Activated B cell treated with CpG ODN at 0.5 μM for 24 hours (primary cell): ENCODE measurements at regions of chr2 and their contacts with region 1.

Region 1: GRCh38 chr2:19362755-19363473 is 4.5 kb upstream of the OSR1 start:
- DNase-seq: no peak
- ATAC-seq: peak; percentile 45
- H3K4me3 Mint-ChIP-seq: peak overlapping the region; percentile 86
- H3K27ac Mint-ChIP-seq: peak overlapping the region; percentile 64
- H3K4me1 Mint-ChIP-seq: peaks cover 38% of the 10 kb centered on the region
- H3K27me3 Mint-ChIP-seq: peaks cover 22% of the 10 kb centered on the region
- CTCF ChIP-seq: no peak

Region 2: GRCh38 chr2:18520451-18521425 is 842.2 kb before region 1 on chr2:
- CTCF ChIA-PET with region 1: interaction called, 10 read pairs
- POLR2A ChIA-PET with region 1: no interaction called
- intact Hi-C with region 1: loop called (anchors 1 kb)
- DNase-seq: peak; percentile 63
- ATAC-seq: peak; percentile 61
- H3K4me3 Mint-ChIP-seq: no peak overlapping the region
- H3K27ac Mint-ChIP-seq: no peak overlapping the region
- H3K4me1 Mint-ChIP-seq: no peaks in the 10 kb centered on the region
- H3K27me3 Mint-ChIP-seq: peaks cover 19% of the 10 kb centered on the region
- CTCF ChIP-seq: peak; percentile 79

Region 3: GRCh38 chr2:18749912-18750526 is 612.9 kb before region 1 on chr2:
- CTCF ChIA-PET with region 1: no interaction called
- POLR2A ChIA-PET with region 1: no interaction called
- intact Hi-C with region 1: loop called (anchors 1 kb)
- DNase-seq: no peak
- ATAC-seq: no peak
- H3K4me3 Mint-ChIP-seq: no peak overlapping the region
- H3K27ac Mint-ChIP-seq: no peak overlapping the region
- H3K4me1 Mint-ChIP-seq: no peaks in the 10 kb centered on the region
- H3K27me3 Mint-ChIP-seq: no peaks in the 10 kb centered on the region
- CTCF ChIP-seq: peak; percentile 61

Region 4: GRCh38 chr2:19347619-19348562 is 15.0 kb before region 1 on chr2:
- CTCF ChIA-PET with region 1: interaction called, 4 read pairs
- POLR2A ChIA-PET with region 1: interaction called, 15 read pairs
- intact Hi-C with region 1: loop called (anchors 1 kb)
- DNase-seq: peak; percentile 100
- ATAC-seq: peak; percentile 89
- H3K4me3 Mint-ChIP-seq: peak overlapping the region; percentile 98
- H3K27ac Mint-ChIP-seq: peak overlapping the region; percentile 98
- H3K4me1 Mint-ChIP-seq: peaks cover 35% of the 10 kb centered on the region
- H3K27me3 Mint-ChIP-seq: peaks cover 28% of the 10 kb centered on the region
- CTCF ChIP-seq: no peak

Region 5: DNA sequence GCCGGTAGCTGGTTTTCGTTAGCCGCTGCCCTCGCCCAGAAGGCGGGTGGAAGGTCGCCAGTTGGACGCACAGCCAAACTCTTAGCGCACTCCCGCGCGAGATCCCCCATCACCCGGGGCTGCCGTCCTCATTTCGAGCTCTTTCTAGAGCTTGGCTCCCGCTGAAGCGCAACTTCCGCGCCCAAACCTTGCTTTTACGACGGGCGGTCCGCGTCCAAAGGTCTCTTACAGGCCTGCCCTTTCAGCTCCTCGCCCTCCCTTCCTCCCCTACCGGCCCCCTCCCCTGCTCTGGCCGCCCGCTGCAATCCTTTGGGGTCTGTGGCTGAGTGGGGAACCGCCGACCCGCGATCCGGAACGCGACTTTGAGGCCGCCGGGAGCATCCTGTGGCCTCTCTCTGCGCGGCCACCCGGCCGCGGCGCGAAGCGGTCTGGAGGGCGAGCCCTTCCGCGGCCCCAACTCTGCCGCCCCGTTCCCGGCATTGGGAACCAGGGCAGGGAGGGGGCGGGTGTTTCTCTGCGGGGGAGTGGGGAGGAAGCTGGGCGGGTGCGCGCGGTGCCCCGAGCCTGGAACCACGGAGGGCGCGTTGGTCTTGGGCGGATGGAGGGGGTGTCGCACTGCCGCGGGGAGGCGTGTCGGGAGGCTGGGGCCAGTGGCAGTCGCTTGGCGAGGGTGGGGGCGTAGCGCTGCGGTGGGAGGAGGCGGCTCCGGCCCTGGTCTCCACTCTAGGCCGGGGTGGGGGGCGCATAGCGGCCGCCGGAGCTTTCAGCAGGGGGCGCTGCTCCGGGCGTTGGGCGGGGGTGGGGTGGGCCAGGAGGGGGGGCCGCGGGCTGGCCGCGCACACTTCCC is 1303.6 kb after region 1 on chr2 and contains the start of gene GDF7:
- CTCF ChIA-PET with region 1: no interaction called
- POLR2A ChIA-PET with region 1: no interaction called
- intact Hi-C with region 1: loop called (anchors 5 kb)
- DNase-seq: peak; percentile 67
- ATAC-seq: peak; percentile 78
- H3K4me3 Mint-ChIP-seq: peak within 1 kb of the TSS; percentile 87
- H3K27ac Mint-ChIP-seq: peak within 1 kb of the TSS; percentile 82
- H3K4me1 Mint-ChIP-seq: peaks cover 32% of the 10 kb centered on the region
- H3K27me3 Mint-ChIP-seq: peaks cover 8% of the 10 kb centered on the region
- CTCF ChIP-seq: no peak
- total RNA-seq, gene GDF7: 5.9 and 6.7 TPM in 2 replicates